K562 (cell line): ENCODE measurements at regions of chr4 and their contacts with region 1.

Region 1: GRCh38 chr4:6673660-6674499 is 19.8 kb upstream of the S100P start:
- DNase-seq: peak; percentile 96 to 98 (median 97)
- ATAC-seq: peak; percentile 83
- H3K4me3 ChIP-seq: peak overlapping the region; percentile 95
- H3K27ac ChIP-seq: peak overlapping the region; percentile 99
- H3K4me1 ChIP-seq: peaks cover 29 to 33% of the 10 kb centered on the region in 2 experiments
- H3K27me3 ChIP-seq: no peaks in the 10 kb centered on the region
- CTCF ChIP-seq: peak in 1 of 3 experiments; percentile 21; a peak in 2 of 6 replicates
- EP300 ChIP-seq: no peak
- POLR2A ChIP-seq: peak; percentile 99
- RAD21 ChIP-seq: no peak

Region 2: DNA sequence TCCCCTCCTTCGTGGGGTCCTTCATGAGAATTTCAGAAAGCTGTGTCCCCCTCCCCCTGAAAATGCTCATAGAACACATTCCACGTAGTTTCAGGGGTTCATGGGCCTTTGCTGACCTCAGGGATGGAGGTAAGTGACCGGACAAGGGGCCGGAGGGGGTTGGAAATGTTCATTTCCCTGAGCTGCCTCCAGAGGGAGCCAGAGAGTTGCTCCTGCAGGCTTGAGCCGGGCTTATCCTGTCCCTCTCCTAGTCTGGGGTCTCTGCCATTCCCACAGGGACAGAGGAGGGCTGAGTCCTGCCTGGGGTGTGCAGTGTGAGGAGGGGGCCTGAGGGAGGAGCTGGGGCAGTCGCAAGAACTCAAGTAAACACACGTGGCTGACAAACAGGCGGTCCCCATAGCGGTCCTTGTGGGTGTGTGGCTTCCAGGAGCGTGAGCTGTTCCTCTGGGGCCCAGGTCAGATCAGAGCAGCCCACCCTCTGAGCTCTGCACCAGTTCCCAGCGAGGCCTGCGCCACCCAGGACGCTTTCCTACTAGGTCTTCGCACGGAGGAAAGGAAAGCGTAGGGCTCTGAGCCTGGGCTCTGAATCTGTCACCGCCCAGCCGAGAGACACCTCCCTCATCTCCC is 341.7 kb before region 1 on chr4:
- CTCF ChIA-PET with region 1: no interaction called
- POLR2A ChIA-PET with region 1: no interaction called
- in situ Hi-C with region 1: no loop called
- intact Hi-C with region 1: no loop called
- DNase-seq: peak; percentile 55 to 72 (median 68)
- ATAC-seq: peak; percentile 75
- H3K4me3 ChIP-seq: no peak overlapping the region
- H3K27ac ChIP-seq: no peak overlapping the region
- H3K4me1 ChIP-seq: peaks cover 0 to 8% of the 10 kb centered on the region in 2 experiments; a peak in 2 of 5 replicates
- H3K27me3 ChIP-seq: peaks cover 0 to 9% of the 10 kb centered on the region in 2 experiments; a peak in 2 of 5 replicates
- CTCF ChIP-seq: peak; percentile 71 to 79 (median 78)
- EP300 ChIP-seq: no peak
- POLR2A ChIP-seq: no peak
- RAD21 ChIP-seq: peak in 1 of 2 experiments; percentile 52; a peak in 2 of 4 replicates

Region 3: GRCh38 chr4:6546681-6547447 is 127.0 kb before region 1 on chr4:
- CTCF ChIA-PET with region 1: no interaction called
- POLR2A ChIA-PET with region 1: interaction called, 4 read pairs
- in situ Hi-C with region 1: no loop called
- intact Hi-C with region 1: loop called (anchors 5 kb)
- DNase-seq: peak; percentile 79 to 84 (median 82)
- ATAC-seq: peak; percentile 87
- H3K4me3 ChIP-seq: no peak overlapping the region
- H3K27ac ChIP-seq: no peak overlapping the region
- H3K4me1 ChIP-seq: no peaks in the 10 kb centered on the region
- H3K27me3 ChIP-seq: peaks cover 0 to 29% of the 10 kb centered on the region in 2 experiments; a peak in 2 of 5 replicates
- CTCF ChIP-seq: peak; percentile 89 to 93 (median 91)
- EP300 ChIP-seq: no peak
- POLR2A ChIP-seq: no peak
- RAD21 ChIP-seq: peak; percentile 54 to 78

Region 4: GRCh38 chr4:6640292-6641163 is 33.4 kb before region 1 on chr4 and contains the start of gene MRFAP1:
- CTCF ChIA-PET with region 1: interaction called, 4 read pairs
- POLR2A ChIA-PET with region 1: interaction called, 40 read pairs
- in situ Hi-C with region 1: no loop called
- intact Hi-C with region 1: loop called (anchors 5 kb)
- DNase-seq: peak; percentile 95 to 97 (median 96)
- ATAC-seq: peak; percentile 82
- H3K4me3 ChIP-seq: peak within 1 kb of the TSS; percentile 85
- H3K27ac ChIP-seq: peak within 1 kb of the TSS; percentile 97
- H3K4me1 ChIP-seq: peaks cover 16 to 24% of the 10 kb centered on the region in 2 experiments; a peak in 4 of 5 replicates
- H3K27me3 ChIP-seq: no peaks in the 10 kb centered on the region
- CTCF ChIP-seq: no peak
- EP300 ChIP-seq: no peak; the same call in 1 of the 2 replicates
- POLR2A ChIP-seq: peak; percentile 94
- RAD21 ChIP-seq: no peak; a peak in 1 of 4 replicates
- polyA plus RNA-seq, gene MRFAP1: 46.0 to 59.9 TPM

Region 5: GRCh38 chr4:6688879-6689505 is 15.1 kb after region 1 on chr4:
- CTCF ChIA-PET with region 1: no interaction called
- POLR2A ChIA-PET with region 1: interaction called, 38 read pairs
- in situ Hi-C with region 1: no loop called
- intact Hi-C with region 1: no loop called
- DNase-seq: peak; percentile 71 to 83 (median 76)
- ATAC-seq: peak; percentile 74
- H3K4me3 ChIP-seq: peak overlapping the region; percentile 3; the same call in 1 of the 2 replicates
- H3K27ac ChIP-seq: peak overlapping the region; percentile 74
- H3K4me1 ChIP-seq: peaks cover 40 to 53% of the 10 kb centered on the region in 2 experiments
- H3K27me3 ChIP-seq: no peaks in the 10 kb centered on the region
- CTCF ChIP-seq: peak in 1 of 3 experiments; percentile 31; a peak in 2 of 6 replicates
- EP300 ChIP-seq: no peak
- POLR2A ChIP-seq: peak; percentile 45; the same call in 1 of the 2 replicates
- RAD21 ChIP-seq: peak in 1 of 2 experiments; percentile 22; a peak in 1 of 4 replicates

Region 6: DNA sequence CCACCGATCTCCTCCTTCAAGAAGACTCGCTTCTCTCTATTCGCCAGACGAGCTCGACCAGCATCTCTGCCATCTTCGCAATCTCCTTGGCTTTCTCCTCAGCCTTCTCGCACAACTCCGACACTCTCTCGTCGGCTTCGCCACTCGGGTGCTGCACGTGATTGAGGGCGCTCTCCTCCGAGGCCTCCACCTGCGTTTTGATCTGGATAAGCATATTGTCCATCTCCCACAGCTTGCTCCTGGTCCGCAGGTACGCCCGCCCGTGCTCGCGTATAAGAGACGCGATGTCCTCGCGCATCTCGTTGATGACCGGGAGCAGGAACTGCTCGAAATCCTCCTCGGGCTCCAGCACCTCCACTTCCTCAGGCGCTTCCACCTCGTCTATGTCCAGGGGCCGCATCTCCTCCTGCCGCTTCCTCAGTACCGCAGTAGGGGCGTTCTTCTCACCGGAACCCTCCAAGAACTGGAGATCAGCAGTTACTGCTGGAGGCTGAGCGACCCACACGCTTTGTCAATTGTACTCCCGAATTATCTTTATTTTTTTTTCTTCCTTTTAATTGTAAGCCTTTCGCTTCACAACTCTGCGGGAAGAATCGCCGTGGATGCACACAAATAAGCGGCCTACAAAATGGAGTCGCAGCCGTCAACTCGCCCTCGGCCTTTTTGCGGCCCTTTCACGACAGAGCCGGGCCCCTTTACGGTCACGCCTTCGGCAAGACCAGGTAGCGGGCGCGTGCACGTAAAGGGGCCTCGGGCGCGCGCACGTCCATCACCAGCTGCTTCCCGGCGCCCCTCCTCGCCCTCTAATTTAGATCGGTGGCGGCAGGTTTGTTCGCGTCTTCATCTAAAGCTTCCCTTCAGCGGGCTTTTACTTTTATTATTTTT is 35.6 kb after region 1 on chr4 and contains the start of gene MRFAP1L1:
- CTCF ChIA-PET with region 1: no interaction called
- POLR2A ChIA-PET with region 1: interaction called, 10 read pairs
- in situ Hi-C with region 1: no loop called
- intact Hi-C with region 1: no loop called
- DNase-seq: peak; percentile 94 to 98 (median 95)
- ATAC-seq: peak; percentile 86
- H3K4me3 ChIP-seq: peak within 1 kb of the TSS; percentile 73
- H3K27ac ChIP-seq: peak within 1 kb of the TSS; percentile 75
- H3K4me1 ChIP-seq: peaks cover 3 to 22% of the 10 kb centered on the region in 2 experiments; a peak in 4 of 5 replicates
- H3K27me3 ChIP-seq: no peaks in the 10 kb centered on the region
- CTCF ChIP-seq: no peak
- EP300 ChIP-seq: no peak; the same call in 1 of the 2 replicates
- POLR2A ChIP-seq: peak; percentile 87
- RAD21 ChIP-seq: no peak
- polyA plus RNA-seq, gene MRFAP1L1: 37.6 to 48.1 TPM

Region 7: GRCh38 chr4:6749341-6750171 is 75.7 kb after region 1 on chr4:
- CTCF ChIA-PET with region 1: no interaction called
- POLR2A ChIA-PET with region 1: no interaction called
- in situ Hi-C with region 1: no loop called
- intact Hi-C with region 1: no loop called
- DNase-seq: peak; percentile 44 to 56 (median 50)
- ATAC-seq: no peak; the same call in 2 of the 3 replicates
- H3K4me3 ChIP-seq: no peak overlapping the region
- H3K27ac ChIP-seq: no peak overlapping the region; the same call in 2 of the 3 replicates
- H3K4me1 ChIP-seq: peaks cover 42 to 58% of the 10 kb centered on the region in 2 experiments
- H3K27me3 ChIP-seq: no peaks in the 10 kb centered on the region
- CTCF ChIP-seq: no peak
- EP300 ChIP-seq: no peak
- POLR2A ChIP-seq: no peak
- RAD21 ChIP-seq: no peak

Region 8: DNA sequence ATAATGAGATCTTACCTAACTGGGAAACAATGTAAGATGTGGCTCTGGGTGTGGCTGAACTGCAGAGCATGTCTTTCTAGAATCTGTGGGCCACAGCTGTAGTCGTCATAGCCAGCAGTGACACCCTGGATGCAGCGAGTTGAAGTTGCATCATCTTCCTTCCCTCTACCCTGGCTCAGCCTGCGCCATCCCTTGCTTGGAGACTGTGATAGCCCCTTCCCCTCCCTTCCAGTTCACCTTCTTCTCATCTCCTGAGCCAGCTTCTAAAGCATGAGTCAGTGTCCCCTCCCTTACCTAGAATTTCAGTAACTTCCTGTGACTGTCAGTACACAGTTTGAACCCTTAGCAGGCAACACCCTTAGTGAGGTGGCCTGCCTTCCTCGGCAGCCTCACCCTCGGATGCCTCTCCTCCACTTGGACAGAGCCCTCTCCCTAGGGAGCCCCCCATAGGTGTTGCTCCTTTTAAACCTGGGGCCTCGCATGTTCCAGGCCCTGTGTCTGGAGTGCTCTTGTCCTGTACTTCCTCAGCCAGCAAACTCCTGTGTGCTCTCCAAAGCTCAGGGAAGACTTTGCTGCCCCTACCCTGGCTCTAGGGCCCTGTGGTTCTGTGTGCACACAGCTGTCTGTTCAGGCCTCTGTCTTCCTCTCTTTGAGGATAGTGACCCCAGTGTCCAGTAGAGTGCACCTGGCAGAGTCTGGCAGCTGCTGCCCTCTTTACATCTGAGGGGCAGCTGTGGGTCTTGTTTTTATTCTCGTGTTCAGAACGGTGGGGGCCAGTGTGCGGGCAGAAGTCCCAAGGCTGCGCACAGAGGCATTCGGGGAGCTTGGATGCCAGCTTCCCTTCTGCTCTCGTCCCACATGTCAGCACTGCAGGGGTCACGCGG is 325.5 kb after region 1 on chr4:
- CTCF ChIA-PET with region 1: no interaction called
- POLR2A ChIA-PET with region 1: no interaction called
- in situ Hi-C with region 1: no loop called
- intact Hi-C with region 1: no loop called
- DNase-seq: peak in 3 of 4 experiments; percentile 28 to 36 (median 30)
- ATAC-seq: peak; percentile 89
- H3K4me3 ChIP-seq: no peak overlapping the region
- H3K27ac ChIP-seq: peak overlapping the region; percentile 46; the same call in 2 of the 3 replicates
- H3K4me1 ChIP-seq: peaks cover 0 to 12% of the 10 kb centered on the region in 2 experiments; a peak in 2 of 5 replicates
- H3K27me3 ChIP-seq: no peaks in the 10 kb centered on the region
- CTCF ChIP-seq: no peak
- EP300 ChIP-seq: peak; percentile 27
- POLR2A ChIP-seq: no peak
- RAD21 ChIP-seq: no peak